ENCODE measurements at regions of chr20 and their contacts with region 1.

Region 1: GRCh38 chr20:50992733-50993457 is 30.0 kb downstream of the KCNG1 start:
- DNase-seq: peak; percentile 86

Region 2: GRCh38 chr20:50680412-50680908 is 312.4 kb before region 1 on chr20:
- CTCF ChIA-PET with region 1: no interaction called
- POLR2A ChIA-PET with region 1: no interaction called
- DNase-seq: no peak

Region 3: GRCh38 chr20:51022803-51023630 is 30.1 kb after region 1 on chr20 and contains the start of gene KCNG1:
- CTCF ChIA-PET with region 1: no interaction called
- POLR2A ChIA-PET with region 1: no interaction called
- DNase-seq: peak; percentile 90

Region 4: GRCh38 chr20:51206032-51206662 is 213.3 kb after region 1 on chr20:
- CTCF ChIA-PET with region 1: no interaction called
- POLR2A ChIA-PET with region 1: no interaction called
- DNase-seq: no peak

Region 5: DNA sequence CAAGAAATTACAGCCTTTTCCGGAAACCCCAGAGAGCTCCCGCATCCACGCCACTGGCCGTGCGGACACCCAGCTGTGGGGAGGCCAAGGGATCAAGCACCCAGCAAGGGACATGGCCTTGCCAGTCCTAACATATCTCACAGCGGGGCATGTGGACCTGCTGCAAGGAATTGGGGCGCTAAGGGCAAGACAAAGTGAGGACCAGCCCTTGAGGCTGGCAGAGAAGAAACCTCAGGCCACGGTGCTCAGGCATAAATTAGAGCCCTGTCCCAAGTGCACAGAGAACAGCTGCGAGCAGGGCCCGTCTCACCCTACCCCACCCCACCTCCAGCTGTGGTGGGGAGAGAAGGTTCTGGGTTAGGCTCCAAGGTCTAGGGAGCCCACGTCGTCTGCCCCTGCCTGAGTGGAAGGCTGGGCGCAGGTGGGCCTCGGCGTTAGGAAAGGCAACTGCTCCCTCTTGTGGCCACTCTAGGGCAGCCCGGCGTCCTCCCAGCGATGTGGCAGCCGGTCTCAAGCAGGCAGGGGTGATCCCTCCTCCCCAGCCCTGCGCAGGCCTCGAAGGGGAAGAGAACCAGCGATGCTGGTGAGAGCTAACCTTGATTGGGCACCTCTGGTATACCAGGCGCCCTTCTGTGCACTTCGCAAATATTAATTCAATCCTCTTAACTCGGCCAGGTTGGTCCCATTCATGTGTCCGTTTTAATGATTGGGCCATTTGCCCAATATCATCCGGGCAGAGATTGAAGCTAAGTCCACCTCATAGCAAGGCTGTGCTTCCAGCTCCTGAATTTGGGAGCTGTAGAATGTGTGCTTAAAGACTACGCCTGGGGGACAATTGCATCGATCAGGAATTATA is 313.8 kb after region 1 on chr20:
- CTCF ChIA-PET with region 1: interaction called, 32 read pairs
- POLR2A ChIA-PET with region 1: no interaction called
- DNase-seq: peak; percentile 88